Common myeloid progenitor, CD34-positive (primary cell): ENCODE measurements at regions of chr12 and their contacts with region 1.

Region 1: DNA sequence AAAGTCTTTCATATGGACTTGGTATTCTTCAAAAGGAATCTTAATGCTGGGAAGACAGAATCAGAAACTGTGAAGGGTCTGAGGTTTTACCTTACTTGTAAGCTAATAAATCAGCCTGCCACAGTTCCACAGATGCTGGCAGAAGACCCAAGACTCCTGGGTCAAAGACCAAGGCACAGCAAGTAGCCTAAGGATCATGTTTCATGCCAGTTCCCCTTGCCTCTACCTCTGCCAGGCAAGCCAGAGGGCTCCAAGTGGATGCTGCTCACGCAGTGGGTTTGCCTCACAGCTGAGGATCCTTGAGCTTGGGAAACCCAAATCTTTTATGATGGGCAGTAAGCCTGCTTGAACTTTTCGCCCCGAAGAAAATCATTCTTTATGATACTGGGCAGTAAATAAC is 15.2 kb upstream of the RXYLT1 start:
- DNase-seq: peak in 1 of 3 donors; percentile 2
- H3K4me3 ChIP-seq: no peak overlapping the region
- H3K27ac ChIP-seq: no peak overlapping the region
- H3K4me1 ChIP-seq: no peaks in the 10 kb centered on the region
- H3K27me3 ChIP-seq: no peaks in the 10 kb centered on the region

Region 2: DNA sequence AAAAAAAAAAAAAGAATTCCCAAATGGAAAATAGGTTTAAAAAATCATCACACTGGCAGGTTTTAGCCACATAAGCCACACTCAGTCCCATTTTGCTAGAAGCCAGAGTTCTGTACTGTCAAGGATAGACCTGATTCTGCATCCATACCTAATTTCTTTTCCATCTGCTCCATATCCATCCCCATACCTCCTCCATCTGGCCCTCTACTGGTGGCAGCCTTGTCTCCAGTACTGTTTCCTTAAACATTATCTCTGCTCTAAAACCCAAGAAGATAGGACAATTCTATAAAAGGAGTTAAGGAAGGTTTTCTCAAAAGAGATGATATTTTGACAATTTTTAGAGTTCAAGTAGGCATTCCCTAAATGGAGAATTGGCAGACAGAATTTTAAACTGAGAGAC is 10.7 kb before region 1 on chr12:
- CTCF ChIA-PET with region 1: interaction called, 10 read pairs
- POLR2A ChIA-PET with region 1: interaction called, 4 read pairs
- DNase-seq: peak in 2 of 3 donors; percentile 4 to 15
- H3K4me3 ChIP-seq: no peak overlapping the region
- H3K27ac ChIP-seq: no peak overlapping the region
- H3K4me1 ChIP-seq: peaks cover 5 to 9% (median 5%) of the 10 kb centered on the region in 4 experiments
- H3K27me3 ChIP-seq: no peaks in the 10 kb centered on the region

Region 3: DNA sequence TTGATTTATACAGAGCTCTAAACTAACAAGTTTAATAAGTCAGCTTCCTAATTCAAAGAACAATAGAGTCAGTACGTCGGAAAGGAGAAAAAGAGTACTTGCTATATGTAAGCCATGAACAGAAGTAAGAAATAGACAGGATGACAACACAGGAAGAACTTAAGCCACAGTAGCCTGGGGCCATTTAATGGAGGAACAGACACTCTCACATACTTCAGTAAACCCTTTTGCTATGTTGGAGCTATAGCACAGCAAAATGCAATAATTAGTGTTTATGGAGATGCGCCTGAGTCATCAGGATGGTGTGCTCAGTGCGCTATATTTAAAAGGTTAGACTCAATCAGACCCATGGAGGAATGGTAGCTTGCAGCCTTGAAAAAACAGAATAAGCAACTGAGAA is 141.1 kb after region 1 on chr12:
- CTCF ChIA-PET with region 1: no interaction called
- POLR2A ChIA-PET with region 1: no interaction called
- DNase-seq: no peak
- H3K4me3 ChIP-seq: no peak overlapping the region
- H3K27ac ChIP-seq: no peak overlapping the region
- H3K4me1 ChIP-seq: peaks cover 0 to 2% (median 0%) of the 10 kb centered on the region in 4 experiments
- H3K27me3 ChIP-seq: no peaks in the 10 kb centered on the region